ENCODE measurements at regions of chr1 and their contacts with region 1.

Region 1: DNA sequence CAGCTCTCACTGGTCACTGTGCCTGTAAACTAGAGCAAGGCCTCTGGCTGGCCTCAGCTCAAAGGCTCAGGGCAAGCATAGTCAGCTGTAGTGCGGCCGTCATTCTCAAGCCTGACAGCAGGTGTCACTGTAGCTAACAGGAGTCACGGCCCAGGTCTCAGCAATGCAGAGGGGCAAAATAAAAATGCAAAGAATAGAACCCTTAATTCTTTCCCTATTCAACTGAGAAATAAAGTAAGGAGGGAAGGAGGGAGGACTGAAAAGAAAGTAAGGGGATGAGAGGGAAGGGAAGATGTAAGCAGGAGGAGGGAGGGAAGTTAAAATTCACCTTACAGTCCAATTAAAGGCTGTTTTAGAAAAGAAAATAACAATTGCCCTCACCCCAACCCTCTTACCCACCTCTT is 106.1 kb downstream of the KIAA0319L start:
- DNase-seq: peak; percentile 44 to 79 (median 68)
- ATAC-seq: peak; percentile 89
- H3K4me3 ChIP-seq: no peak overlapping the region
- H3K4me3 Mint-ChIP-seq: peak overlapping the region in 9 of 10 donors; percentile 14 to 86 (median 55)
- H3K27ac ChIP-seq: peak overlapping the region; percentile 34
- H3K27ac Mint-ChIP-seq: peak overlapping the region; percentile 31 to 94 (median 77)
- H3K4me1 ChIP-seq: peaks cover 12 to 19% of the 10 kb centered on the region in 2 donors
- H3K4me1 Mint-ChIP-seq: peaks cover 24 to 38% (median 31%) of the 10 kb centered on the region in 7 donors
- H3K27me3 ChIP-seq: no peaks in the 10 kb centered on the region
- H3K27me3 Mint-ChIP-seq: no peaks in the 10 kb centered on the region

Region 2: DNA sequence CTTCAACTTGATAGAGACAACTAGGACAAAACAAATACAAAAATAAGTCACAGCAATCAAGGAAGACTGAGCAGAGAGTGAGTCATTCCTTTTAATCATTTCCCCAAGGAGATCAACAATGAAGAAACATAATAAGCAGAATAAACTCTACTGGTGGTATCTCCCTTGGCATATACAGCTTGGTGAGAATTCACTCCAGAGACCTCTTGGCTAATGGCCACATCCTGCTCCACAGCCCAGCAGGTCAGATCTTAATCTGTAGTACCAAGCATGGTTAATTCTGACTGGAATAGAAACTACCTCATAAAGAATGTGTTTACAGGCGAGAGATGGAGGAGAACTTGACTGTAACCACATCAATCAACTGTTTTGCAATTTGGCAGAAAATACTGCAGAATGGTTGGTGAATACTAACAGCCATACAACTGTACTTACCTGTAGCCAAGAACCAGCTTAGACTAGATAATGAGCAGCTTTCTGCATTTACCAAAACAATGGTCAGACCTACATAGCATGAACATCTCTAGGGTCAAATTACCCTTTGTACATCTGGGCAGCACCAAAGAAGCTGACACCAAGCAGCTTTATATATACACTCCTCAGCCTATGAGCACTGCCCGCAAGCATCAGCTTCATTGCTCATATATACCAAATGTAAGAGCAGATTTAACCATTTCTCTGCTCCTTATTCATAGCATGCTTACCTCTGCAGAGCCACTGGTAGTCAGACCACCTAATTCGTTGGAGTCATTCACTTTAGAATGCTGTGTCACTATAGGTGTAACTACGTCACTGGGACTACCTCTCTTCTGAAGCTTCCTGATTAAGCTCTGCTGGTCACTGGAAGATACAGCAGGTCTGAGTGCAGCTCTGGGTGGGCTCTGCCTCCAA is 55.0 kb after region 1 on chr1:
- CTCF ChIA-PET with region 1: interaction called, 6 read pairs
- POLR2A ChIA-PET with region 1: interaction called, 3 read pairs
- intact Hi-C with region 1: loop called (anchors 1 to 2 kb)
- DNase-seq: peak in 8 of 9 donors; percentile 29 to 73 (median 56)
- ATAC-seq: peak; percentile 84
- H3K4me3 ChIP-seq: peak overlapping the region; percentile 16
- H3K4me3 Mint-ChIP-seq: peak overlapping the region; percentile 75 to 84 (median 78)
- H3K27ac ChIP-seq: peak overlapping the region; percentile 60
- H3K27ac Mint-ChIP-seq: peak overlapping the region; percentile 73 to 97 (median 93)
- H3K4me1 ChIP-seq: peaks cover 32 to 45% of the 10 kb centered on the region in 2 donors
- H3K4me1 Mint-ChIP-seq: peaks cover 44 to 85% (median 82%) of the 10 kb centered on the region in 7 donors
- H3K27me3 ChIP-seq: no peaks in the 10 kb centered on the region
- H3K27me3 Mint-ChIP-seq: no peaks in the 10 kb centered on the region

Region 3: GRCh38 chr1:35524106-35524505 is 73.0 kb after region 1 on chr1:
- CTCF ChIA-PET with region 1: no interaction called
- POLR2A ChIA-PET with region 1: no interaction called
- intact Hi-C with region 1: no loop called
- DNase-seq: no peak
- ATAC-seq: no peak
- H3K4me3 ChIP-seq: no peak overlapping the region
- H3K4me3 Mint-ChIP-seq: no peak overlapping the region
- H3K27ac ChIP-seq: no peak overlapping the region
- H3K27ac Mint-ChIP-seq: peak overlapping the region in 1 of 9 donors; percentile 35
- H3K4me1 ChIP-seq: no peaks in the 10 kb centered on the region
- H3K4me1 Mint-ChIP-seq: peaks cover 11 to 30% (median 17%) of the 10 kb centered on the region in 7 donors
- H3K27me3 ChIP-seq: no peaks in the 10 kb centered on the region
- H3K27me3 Mint-ChIP-seq: no peaks in the 10 kb centered on the region

Region 4: GRCh38 chr1:35539073-35539823 is 88.1 kb after region 1 on chr1:
- CTCF ChIA-PET with region 1: interaction called, 50 read pairs
- POLR2A ChIA-PET with region 1: interaction called, 9 read pairs
- intact Hi-C with region 1: no loop called
- DNase-seq: peak in 8 of 9 donors; percentile 30 to 88 (median 79)
- ATAC-seq: peak; percentile 90
- H3K4me3 ChIP-seq: peak overlapping the region; percentile 29
- H3K4me3 Mint-ChIP-seq: peak overlapping the region; percentile 54 to 93 (median 82)
- H3K27ac ChIP-seq: peak overlapping the region; percentile 65
- H3K27ac Mint-ChIP-seq: peak overlapping the region; percentile 89 to 100 (median 93)
- H3K4me1 ChIP-seq: peaks cover 35 to 55% of the 10 kb centered on the region in 2 donors
- H3K4me1 Mint-ChIP-seq: peaks cover 53 to 94% (median 87%) of the 10 kb centered on the region in 7 donors
- H3K27me3 ChIP-seq: no peaks in the 10 kb centered on the region
- H3K27me3 Mint-ChIP-seq: no peaks in the 10 kb centered on the region

Region 5: GRCh38 chr1:35544978-35545377 is 93.9 kb after region 1 on chr1:
- CTCF ChIA-PET with region 1: interaction called, 50 read pairs
- POLR2A ChIA-PET with region 1: interaction called, 9 read pairs
- intact Hi-C with region 1: loop called (anchors 1 kb)
- DNase-seq: peak in 6 of 9 donors; percentile 34 to 69 (median 58)
- ATAC-seq: peak; percentile 90
- H3K4me3 ChIP-seq: no peak overlapping the region
- H3K4me3 Mint-ChIP-seq: peak overlapping the region in 4 of 10 donors; percentile 0 to 26 (median 16)
- H3K27ac ChIP-seq: peak overlapping the region; percentile 12
- H3K27ac Mint-ChIP-seq: peak overlapping the region in 7 of 9 donors; percentile 3 to 93 (median 67)
- H3K4me1 ChIP-seq: peaks cover 10 to 13% of the 10 kb centered on the region in 2 donors
- H3K4me1 Mint-ChIP-seq: peaks cover 49 to 89% (median 78%) of the 10 kb centered on the region in 7 donors
- H3K27me3 ChIP-seq: no peaks in the 10 kb centered on the region
- H3K27me3 Mint-ChIP-seq: no peaks in the 10 kb centered on the region

Region 6: DNA sequence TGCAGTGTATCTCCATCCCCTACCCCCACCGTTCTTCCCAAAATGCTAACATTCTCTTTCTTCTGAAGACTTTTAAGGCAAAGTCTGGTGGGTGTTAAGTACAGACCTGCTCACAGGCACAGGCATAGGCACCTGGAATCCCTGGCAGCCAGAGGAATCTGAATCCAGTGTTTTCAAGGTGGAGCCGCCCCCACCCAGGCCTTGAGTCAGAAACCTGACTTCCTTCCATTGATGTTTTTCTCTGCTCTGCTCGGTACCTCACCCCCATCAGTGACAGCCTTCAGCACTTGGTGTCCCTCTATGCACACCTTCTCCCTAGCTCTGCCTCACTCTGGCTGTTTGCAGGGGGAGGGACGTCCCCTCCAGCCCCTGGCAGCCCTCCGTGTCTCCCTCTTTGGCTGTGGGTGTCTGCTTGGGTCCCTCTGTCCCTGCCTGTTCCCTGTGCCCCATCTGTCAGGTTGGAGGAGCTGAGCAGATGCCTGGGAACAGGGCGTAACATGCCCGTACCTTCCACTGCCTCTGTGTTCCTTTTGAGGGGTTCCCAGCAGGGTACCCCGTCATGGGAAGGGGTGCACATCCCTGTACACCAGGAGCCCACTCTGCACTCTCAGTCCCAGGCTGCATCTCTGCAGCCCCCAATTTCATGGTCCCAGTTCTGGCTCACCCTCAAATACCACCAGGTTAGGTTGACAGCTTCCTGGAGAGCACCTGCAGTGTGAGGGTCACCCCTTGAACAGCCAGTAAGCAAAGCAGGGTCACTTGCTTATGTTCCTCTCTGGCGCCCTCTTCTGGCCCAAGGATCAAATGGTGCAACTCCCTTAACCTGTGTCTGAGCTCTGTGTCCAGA is 113.1 kb after region 1 on chr1:
- CTCF ChIA-PET with region 1: interaction called, 97 read pairs
- POLR2A ChIA-PET with region 1: interaction called, 10 read pairs
- intact Hi-C with region 1: loop called (anchors 1 kb)
- DNase-seq: peak; percentile 58 to 82 (median 70)
- ATAC-seq: peak; percentile 79
- H3K4me3 ChIP-seq: no peak overlapping the region
- H3K4me3 Mint-ChIP-seq: peak overlapping the region in 1 of 10 donors; percentile 56
- H3K27ac ChIP-seq: no peak overlapping the region
- H3K27ac Mint-ChIP-seq: peak overlapping the region in 7 of 9 donors; percentile 23 to 91 (median 60)
- H3K4me1 ChIP-seq: no peaks in the 10 kb centered on the region
- H3K4me1 Mint-ChIP-seq: peaks cover 25 to 41% (median 31%) of the 10 kb centered on the region in 7 donors
- H3K27me3 ChIP-seq: no peaks in the 10 kb centered on the region
- H3K27me3 Mint-ChIP-seq: no peaks in the 10 kb centered on the region

Region 7: DNA sequence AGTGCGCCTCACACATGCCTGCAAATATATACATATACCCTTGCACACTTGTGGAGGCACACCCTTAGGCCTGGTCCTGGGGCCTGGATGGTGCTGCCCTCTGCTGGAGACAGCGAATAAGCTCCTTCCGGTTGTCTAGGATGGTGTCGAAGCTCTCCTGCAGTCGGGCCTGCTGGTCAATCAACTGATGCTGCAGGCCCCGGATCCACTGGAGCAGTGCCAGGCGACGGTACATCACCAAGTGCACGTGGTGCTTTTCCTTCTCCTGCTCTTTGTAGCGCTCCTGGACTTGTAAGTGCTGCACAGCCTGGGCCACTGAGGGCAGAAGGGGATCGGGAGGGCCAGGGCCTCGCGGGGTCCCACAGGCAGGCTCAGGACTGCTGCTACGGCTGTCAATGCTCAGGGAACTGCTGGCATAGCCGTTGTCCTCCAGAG is 264.5 kb after region 1 on chr1:
- CTCF ChIA-PET with region 1: interaction called, 9 read pairs
- POLR2A ChIA-PET with region 1: no interaction called
- intact Hi-C with region 1: loop called (anchors 2 to 5 kb)
- DNase-seq: peak; percentile 44 to 79 (median 66)
- ATAC-seq: peak; percentile 82
- H3K4me3 ChIP-seq: no peak overlapping the region
- H3K4me3 Mint-ChIP-seq: peak overlapping the region in 6 of 10 donors; percentile 0 to 53 (median 44)
- H3K27ac ChIP-seq: no peak overlapping the region
- H3K27ac Mint-ChIP-seq: peak overlapping the region in 3 of 9 donors; percentile 3 to 73 (median 59)
- H3K4me1 ChIP-seq: peaks cover 15 to 35% of the 10 kb centered on the region in 2 donors
- H3K4me1 Mint-ChIP-seq: peaks cover 26 to 34% (median 33%) of the 10 kb centered on the region in 7 donors
- H3K27me3 ChIP-seq: no peaks in the 10 kb centered on the region
- H3K27me3 Mint-ChIP-seq: no peaks in the 10 kb centered on the region

Region 8: DNA sequence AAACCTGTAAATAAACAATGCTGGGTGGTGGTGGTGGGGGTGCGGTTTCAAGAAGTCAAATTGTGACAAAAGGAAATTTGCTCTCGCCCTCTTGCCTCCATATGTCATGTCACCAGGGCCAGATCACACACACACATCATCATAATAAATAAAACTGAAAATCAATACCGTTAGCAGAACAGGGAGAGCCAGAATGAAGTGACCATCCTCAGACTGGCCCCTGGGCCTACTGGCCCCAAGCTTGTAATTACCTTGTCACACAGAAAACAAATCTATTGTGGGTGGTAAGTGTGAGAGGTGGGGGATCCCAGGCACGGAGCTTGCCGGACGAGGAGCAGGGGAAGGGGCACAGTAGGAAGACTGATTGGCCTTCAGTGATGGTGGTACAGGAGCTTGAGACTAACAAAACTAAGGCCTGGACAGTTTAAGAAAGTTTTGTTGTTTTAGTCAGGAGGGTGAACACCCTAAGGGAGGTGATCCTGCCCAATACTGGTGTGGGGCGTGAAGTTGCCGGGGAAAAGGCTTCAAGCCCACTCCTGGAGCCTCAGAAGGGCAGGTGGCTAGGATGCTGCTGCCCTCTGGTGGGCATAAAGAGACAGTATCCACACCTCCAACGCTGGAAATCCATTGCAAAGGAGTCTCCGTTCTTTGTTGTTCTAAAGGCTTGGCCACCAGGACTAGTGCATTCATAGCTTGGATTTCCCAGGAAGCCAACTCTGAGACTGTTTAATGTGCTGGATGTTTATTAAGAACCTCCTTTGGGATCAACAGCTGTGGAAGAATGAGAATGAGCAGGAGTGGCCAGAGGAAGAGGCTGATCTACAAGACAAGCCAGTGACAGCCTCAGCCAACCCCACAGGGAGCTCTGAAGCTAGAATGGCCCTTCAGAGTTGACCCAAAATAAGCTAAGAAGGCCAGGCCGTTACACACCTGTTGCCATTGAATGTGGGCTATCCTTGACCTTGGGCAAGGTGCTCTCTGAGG is 275.6 kb after region 1 on chr1:
- CTCF ChIA-PET with region 1: interaction called, 20 read pairs
- POLR2A ChIA-PET with region 1: no interaction called
- intact Hi-C with region 1: loop called in 1 of 2 experiments (anchors 1 kb)
- DNase-seq: peak in 8 of 9 donors; percentile 16 to 59 (median 45)
- ATAC-seq: peak; percentile 90
- H3K4me3 ChIP-seq: no peak overlapping the region
- H3K4me3 Mint-ChIP-seq: no peak overlapping the region
- H3K27ac ChIP-seq: no peak overlapping the region
- H3K27ac Mint-ChIP-seq: no peak overlapping the region
- H3K4me1 ChIP-seq: no peaks in the 10 kb centered on the region
- H3K4me1 Mint-ChIP-seq: peaks cover 0 to 5% (median 0%) of the 10 kb centered on the region in 7 donors
- H3K27me3 ChIP-seq: no peaks in the 10 kb centered on the region
- H3K27me3 Mint-ChIP-seq: no peaks in the 10 kb centered on the region